ENCODE measurements at regions of chr7 and their contacts with region 1.

Region 1: DNA sequence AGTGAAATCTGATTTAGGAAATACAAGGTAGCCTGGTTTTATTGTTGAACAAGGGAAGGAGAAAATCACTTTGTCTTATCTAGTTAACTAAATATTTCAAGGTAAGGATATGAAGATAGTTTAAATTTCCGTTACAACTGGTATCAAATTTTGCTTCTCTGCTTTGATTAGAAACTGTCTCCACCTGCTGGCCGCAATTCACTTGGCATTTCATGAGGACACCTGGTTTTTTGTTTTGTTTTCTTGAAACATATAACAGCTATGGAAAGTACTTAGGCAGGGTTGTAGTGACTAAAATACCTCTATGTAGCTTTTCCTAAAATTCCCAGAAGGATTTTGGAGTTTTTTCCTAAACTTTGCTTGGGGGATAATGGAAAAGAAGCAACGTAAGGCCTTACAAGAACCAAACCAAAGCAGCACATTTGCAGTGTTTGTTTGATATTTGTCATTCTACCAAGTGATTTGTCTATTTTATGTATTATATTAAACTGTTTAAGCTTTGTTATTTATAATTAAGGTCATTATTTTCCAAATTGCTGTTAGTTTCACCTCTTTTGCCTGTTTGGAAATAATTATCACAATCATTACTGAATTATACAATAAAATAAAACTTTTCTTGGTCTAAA is 73.6 kb downstream of the AHCYL2 start:
- DNase-seq: no peak
- H3K4me3 ChIP-seq: no peak overlapping the region
- H3K27ac ChIP-seq: no peak overlapping the region
- H3K4me1 ChIP-seq: no peaks in the 10 kb centered on the region
- H3K27me3 ChIP-seq: no peaks in the 10 kb centered on the region
- CTCF ChIP-seq: peak in 2 of 3 experiments; percentile 31 to 58

Region 2: DNA sequence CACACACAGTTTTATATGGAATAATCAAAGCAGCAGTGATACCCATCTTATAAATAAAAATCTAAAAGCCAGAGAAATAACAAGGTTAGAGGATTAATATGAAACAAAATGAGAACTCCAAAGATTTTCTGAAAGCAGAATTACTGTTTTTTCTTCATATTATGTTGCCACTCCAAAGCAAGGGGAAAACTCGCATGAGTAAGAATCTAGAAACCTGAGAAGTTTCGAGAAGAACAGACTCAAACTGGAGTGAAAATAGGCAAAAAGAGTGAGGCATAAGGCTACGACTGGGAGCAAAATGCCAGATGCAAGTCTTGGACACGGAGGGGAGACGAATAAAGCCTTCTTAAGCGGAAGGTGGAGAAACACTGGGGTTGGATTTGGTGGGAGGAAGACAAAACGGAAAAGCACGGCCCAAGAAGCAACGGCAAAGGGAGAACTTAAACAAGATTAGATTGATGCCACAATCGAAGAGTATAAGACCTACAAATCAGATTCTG is 244.4 kb before region 1 on chr7:
- intact Hi-C with region 1: no loop called
- DNase-seq: no peak
- H3K4me3 ChIP-seq: peak overlapping the region; percentile 75 to 91
- H3K27ac ChIP-seq: peak overlapping the region; percentile 94 to 97
- H3K4me1 ChIP-seq: peaks cover 0 to 13% of the 10 kb centered on the region in 2 donors
- H3K27me3 ChIP-seq: no peaks in the 10 kb centered on the region
- CTCF ChIP-seq: no peak

Region 3: DNA sequence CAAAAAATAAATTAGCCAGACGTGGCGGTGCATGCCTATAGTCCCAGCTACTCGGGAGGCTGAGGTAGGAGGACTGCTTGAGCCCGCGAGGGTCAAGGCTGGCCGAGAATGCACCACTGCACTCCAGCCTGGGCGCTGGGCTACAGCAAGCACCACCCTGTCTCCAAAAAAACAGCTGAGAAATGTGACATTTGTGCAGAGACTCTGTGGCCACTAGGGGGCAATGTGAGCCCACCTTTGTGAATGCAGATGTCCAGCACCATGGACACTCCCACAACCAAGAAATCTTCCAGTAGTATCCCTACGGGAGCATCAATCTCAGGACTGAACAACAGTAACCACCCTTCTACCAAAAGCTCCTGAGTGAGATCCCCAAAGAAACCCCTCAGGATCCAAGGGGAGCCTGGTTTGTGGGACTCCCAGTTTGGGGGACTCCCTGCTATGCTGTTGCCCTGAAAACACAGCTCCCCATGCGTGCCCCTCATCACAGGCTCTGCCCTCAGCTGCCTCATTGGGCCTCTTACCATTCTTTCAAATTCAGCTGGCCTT is 79.8 kb before region 1 on chr7:
- intact Hi-C with region 1: loop called (anchors 2 kb)
- DNase-seq: peak in 1 of 2 donors; percentile 91
- H3K4me3 ChIP-seq: no peak overlapping the region
- H3K27ac ChIP-seq: no peak overlapping the region
- H3K4me1 ChIP-seq: no peaks in the 10 kb centered on the region
- H3K27me3 ChIP-seq: no peaks in the 10 kb centered on the region
- CTCF ChIP-seq: peak; percentile 86 to 90 (median 87)

Measured in ascending aorta (tissue), 2 donors.